ENCODE measurements at regions of chr3 and their contacts with region 1.

Region 1: DNA sequence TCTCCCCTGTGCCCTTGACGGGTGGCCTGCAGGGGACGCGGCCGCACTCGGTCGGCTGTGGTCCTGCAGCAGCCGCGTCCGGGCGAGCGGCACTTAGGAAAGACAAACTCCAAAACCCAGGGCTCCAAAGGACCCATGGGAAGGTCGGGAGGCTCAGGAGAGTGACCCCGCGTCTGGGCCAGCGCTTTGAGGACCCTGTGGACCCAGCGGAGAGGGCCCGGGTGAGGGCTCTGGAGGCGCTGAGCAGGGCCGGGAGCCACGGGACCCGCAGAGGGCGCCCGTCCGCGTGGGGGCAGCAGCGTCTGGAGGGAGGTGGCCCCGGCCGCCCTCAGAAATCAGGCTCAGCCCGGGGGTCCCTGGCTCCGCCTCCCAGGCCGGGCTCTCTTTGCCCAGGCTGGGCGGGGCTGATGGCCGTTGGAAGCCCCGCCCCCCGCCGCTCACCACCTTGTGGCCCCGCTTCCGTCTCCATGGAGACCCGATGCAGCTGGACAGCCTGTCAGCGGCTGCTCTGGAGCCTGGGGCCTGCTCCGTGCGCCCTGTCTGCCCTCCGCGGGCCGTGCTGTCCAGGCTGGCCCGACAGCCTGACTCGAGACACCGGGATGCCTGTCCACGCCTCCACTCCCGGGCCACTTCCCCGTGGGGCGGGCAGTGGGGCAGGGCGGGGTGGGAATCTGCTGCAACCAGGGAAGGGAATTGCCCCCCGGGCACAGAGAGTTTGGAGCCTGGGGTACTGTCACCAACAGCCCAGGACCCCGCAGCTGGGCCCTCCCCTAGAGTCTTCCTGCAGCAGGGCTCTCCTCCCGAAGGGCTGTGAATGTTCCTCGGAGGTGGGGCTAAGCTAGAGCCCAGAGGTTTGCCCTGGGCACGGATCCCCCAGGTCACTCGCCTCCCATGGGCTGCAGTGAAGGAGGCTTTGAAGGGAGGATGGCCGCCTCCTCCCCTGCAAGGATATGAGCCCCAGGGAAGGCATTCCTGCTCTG is 34.8 kb upstream of the RPL32 start:
- DNase-seq: no peak
- H3K4me3 ChIP-seq: no peak overlapping the region
- H3K27ac ChIP-seq: no peak overlapping the region
- H3K4me1 ChIP-seq: no peaks in the 10 kb centered on the region
- H3K27me3 ChIP-seq: peaks cover 3% of the 10 kb centered on the region
- CTCF ChIP-seq: peak in 1 of 2 donors; percentile 29

Region 2: DNA sequence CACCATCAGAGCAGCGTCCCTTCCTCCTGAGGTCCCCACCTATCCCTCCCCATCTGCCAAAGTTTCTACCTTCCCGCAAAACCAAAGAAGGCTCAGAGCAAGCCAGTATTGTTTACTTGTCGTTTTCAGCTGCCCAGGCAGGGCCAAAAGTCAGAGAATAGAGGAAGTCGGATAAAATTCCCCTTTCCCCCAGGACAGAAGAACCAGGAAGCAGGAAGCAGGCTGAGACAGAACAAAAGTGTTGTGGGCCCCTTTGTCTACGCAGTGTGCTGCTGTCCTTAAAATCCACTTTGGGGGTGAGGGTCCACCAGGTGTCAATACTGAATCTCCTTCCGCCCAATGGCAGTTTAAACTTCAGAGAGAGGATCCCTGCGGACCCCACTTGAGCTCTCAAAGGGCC is 16.3 kb before region 1 on chr3:
- CTCF ChIA-PET with region 1: no interaction called
- dilution Hi-C with region 1: no loop called
- in situ Hi-C with region 1: no loop called
- intact Hi-C with region 1: no loop called
- DNase-seq: no peak
- H3K4me3 ChIP-seq: no peak overlapping the region
- H3K27ac ChIP-seq: no peak overlapping the region
- H3K4me1 ChIP-seq: peaks cover 6% of the 10 kb centered on the region
- H3K27me3 ChIP-seq: peaks cover 3% of the 10 kb centered on the region
- CTCF ChIP-seq: no peak

Region 3: DNA sequence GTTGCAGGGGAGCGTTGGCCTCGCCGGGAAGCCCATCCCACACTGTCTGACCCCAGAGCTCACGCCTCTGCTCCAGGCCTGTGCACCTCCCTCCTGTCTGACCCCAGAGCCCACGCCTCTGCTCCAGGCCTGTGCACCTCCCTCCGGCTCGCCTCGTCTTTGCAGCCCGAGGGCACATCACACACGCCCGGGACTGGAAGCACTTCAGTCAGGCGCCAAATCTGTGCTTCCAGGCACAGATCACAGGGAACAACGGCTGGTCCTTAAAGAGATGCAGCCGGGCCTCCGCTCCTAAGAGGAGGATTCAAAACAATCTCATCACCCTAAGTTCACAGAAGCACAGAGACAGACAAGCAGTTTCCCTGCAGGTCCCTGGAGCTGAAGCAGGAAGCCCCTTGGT is 68.3 kb after region 1 on chr3:
- CTCF ChIA-PET with region 1: no interaction called
- dilution Hi-C with region 1: loop called (anchors 5 kb)
- in situ Hi-C with region 1: no loop called
- intact Hi-C with region 1: no loop called
- DNase-seq: no peak
- H3K4me3 ChIP-seq: no peak overlapping the region
- H3K27ac ChIP-seq: no peak overlapping the region
- H3K4me1 ChIP-seq: peaks cover 18% of the 10 kb centered on the region
- H3K27me3 ChIP-seq: no peaks in the 10 kb centered on the region
- CTCF ChIP-seq: no peak

Measured in mammary epithelial cell (primary cell).